ENCODE measurements at regions of chr7 and their contacts with region 1.

Region 1: DNA sequence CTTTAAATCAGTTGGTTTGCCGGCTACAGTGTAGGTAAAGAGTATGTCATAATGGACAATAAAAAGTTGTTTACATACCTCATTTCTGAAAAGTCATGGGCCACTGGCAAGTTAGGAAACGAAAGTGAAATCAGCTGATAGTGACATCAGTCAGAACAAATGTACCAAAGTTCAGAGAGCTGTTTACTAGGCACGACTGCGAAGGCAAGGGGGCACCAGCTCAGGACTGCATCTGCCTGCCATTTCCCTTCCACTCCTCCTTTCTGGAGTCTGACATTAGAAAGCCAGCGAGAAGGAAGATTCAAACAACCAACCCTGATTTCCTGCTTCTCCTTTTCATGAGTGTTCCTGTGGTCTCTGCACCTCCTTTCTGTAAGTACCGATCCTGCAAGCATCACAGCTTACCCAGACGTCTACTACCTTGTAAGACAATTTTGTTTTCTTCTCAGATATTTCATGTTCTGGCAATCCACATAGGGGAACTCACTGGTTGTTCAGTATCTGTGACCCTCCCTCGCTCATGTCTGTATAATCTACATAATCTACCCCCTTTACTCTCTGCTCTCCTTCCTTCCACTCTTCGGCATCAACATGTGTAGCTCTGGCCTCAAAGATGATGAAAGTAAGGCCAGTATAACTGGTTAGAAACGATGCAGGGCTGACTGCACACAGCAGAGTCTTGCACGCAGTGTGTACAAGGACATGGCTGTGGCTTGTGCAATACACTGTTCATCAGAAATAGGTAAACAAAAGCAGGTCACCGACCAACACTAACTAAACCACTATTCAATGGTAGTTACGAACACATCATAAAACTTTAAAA is at the start of gene TMEM140:
- DNase-seq: peak in 2 of 10 donors; percentile 49 to 58
- H3K4me3 ChIP-seq: peak within 1 kb of the TSS; percentile 27 to 75 (median 57)
- H3K27ac ChIP-seq: peak within 1 kb of the TSS; percentile 72 to 98 (median 94)
- H3K27me3 ChIP-seq: no peaks in the 10 kb centered on the region
- CTCF ChIP-seq: peak in 8 of 56 donors; percentile 6 to 23 (median 15)
- total RNA-seq, gene TMEM140: 1.3 to 46.7 (median 10.6) TPM

Region 2: GRCh38 chr7:133887459-133887858 is 1260.7 kb before region 1 on chr7:
- intact Hi-C with region 1: no loop called
- DNase-seq: no peak
- H3K4me3 ChIP-seq: no peak overlapping the region
- H3K27ac ChIP-seq: no peak overlapping the region
- H3K27me3 ChIP-seq: no peaks in the 10 kb centered on the region
- CTCF ChIP-seq: no peak

Region 3: GRCh38 chr7:134986363-134987251 is 161.5 kb before region 1 on chr7 and contains the start of gene AGBL3:
- intact Hi-C with region 1: loop called in 1 of 2 experiments (anchors 2 kb)
- DNase-seq: peak; percentile 82 to 97 (median 93)
- H3K4me3 ChIP-seq: peak within 1 kb of the TSS; percentile 65 to 99 (median 82)
- H3K27ac ChIP-seq: peak within 1 kb of the TSS; percentile 44 to 97 (median 92)
- H3K27me3 ChIP-seq: no peaks in the 10 kb centered on the region
- CTCF ChIP-seq: peak; percentile 42 to 91 (median 71)
- total RNA-seq, gene AGBL3: 2.2 to 11.8 (median 5.8) TPM

Region 4: DNA sequence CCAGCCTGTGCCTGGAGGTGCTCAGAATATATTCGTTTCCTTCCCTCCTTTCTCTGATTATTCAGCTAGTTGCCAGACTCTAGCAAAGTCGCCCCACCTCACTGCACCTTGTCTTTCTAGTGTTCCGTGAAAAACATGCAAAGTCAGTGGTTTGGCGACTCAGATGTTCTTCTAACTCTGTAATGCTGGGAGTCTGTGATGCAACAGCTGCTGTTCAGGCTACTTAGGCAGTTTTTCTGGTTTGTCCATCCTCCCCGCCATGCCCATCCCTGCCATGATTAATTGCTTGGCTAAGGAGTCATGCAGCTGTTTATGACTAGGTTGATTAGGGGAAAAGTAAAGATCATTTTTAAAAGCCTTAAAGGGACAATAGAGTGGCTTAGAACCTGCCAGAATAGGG is 729.7 kb after region 1 on chr7:
- intact Hi-C with region 1: no loop called
- DNase-seq: no peak
- H3K4me3 ChIP-seq: no peak overlapping the region
- H3K27ac ChIP-seq: no peak overlapping the region
- H3K27me3 ChIP-seq: peaks cover 0 to 6% (median 0%) of the 10 kb centered on the region in 45 donors
- CTCF ChIP-seq: no peak

Measured in dorsolateral prefrontal cortex (tissue), 120 donors.